HCT116 (cell line): ENCODE measurements at regions of chr10 and their contacts with region 1.

Region 1: DNA sequence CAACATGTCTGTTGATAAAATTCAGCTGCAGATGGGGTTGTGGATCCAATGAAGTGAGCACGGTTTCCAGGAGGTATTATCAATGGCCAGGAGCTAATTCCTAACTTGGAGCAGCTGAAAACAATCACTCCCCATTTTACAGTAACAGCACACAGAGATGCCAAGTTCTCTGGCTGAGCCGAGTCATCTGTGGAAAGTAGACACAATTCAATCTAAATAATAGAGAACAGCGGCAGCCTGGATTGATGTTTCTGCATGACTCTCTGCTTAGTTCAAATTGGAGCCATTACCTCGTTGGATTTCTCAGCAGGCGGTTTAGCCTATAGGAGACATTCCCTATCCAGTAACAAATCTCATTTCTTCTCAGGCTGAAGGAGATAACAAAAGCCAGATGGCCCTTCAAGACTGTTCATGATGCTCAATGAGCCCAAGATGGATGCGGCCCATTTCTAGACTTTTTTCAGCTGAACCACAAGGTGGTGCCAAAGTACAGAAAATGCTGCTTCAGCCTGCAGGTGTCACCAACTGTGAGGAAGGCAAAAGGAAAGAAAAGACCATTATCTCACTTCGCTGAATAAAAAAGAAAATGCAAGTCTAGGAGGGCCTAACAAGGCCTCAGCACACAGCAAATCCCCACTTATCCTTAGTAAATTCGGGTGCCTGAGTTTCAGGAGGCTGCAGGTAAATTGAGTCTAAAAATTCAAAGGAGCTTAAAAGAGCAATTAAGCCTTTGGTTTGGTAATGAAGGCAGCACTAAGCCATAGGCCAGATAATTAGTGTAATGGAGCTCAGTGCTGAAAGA is 83.7 kb downstream of the SLC16A9 start:
- DNase-seq: peak; percentile 48
- ATAC-seq: peak; percentile 88
- H3K4me3 ChIP-seq: no peak overlapping the region
- H3K27ac ChIP-seq: no peak overlapping the region
- H3K4me1 ChIP-seq: no peaks in the 10 kb centered on the region
- H3K27me3 ChIP-seq: no peaks in the 10 kb centered on the region
- CTCF ChIP-seq: peak; percentile 68 to 94 (median 90)
- POLR2A ChIP-seq: no peak
- RAD21 ChIP-seq: peak; percentile 96

Region 2: DNA sequence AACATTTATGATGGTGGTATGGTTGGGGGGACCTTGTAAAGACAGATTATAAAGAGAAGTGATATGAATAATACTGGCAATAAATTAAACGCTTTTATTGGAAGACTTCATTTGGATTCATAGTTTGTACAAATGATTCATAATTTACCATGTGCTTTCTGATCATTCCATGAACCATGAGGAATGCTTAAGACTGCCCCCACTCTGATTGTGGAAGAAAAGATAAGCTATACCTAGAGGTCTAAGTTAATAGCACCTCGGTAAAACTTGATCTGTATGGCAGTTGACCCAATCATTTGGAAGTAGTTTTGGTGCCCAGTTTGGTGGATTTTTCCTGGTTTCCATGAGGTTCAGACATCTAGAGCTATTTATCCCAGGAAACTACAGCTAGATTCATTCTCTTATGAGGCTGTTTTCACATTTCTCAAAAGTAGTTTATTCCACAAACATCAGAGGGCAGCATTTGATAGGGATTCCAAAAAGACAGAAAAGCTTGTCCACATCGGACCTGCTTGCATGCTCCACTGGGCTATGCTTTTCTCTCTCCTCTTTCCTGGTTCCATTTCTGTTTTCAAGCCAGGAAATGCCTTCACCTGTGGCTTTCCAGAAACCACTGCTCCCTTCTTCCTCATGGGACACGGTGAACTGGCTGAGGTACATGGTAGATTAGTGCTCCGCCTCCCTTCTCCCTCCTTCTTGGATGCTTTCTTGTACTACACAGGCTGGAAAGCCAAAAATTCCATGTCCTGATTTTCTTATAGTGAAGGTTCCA is 1211.5 kb before region 1 on chr10:
- CTCF ChIA-PET with region 1: no interaction called
- POLR2A ChIA-PET with region 1: no interaction called
- RAD21 ChIA-PET with region 1: no interaction called
- intact Hi-C with region 1: loop called (anchors 10 kb)
- DNase-seq: no peak
- ATAC-seq: peak; percentile 83
- H3K4me3 ChIP-seq: no peak overlapping the region
- H3K27ac ChIP-seq: no peak overlapping the region
- H3K4me1 ChIP-seq: no peaks in the 10 kb centered on the region
- H3K27me3 ChIP-seq: no peaks in the 10 kb centered on the region
- CTCF ChIP-seq: peak; percentile 38 to 50 (median 41); a peak in 5 of 6 replicates
- POLR2A ChIP-seq: no peak
- RAD21 ChIP-seq: peak; percentile 79

Region 3: DNA sequence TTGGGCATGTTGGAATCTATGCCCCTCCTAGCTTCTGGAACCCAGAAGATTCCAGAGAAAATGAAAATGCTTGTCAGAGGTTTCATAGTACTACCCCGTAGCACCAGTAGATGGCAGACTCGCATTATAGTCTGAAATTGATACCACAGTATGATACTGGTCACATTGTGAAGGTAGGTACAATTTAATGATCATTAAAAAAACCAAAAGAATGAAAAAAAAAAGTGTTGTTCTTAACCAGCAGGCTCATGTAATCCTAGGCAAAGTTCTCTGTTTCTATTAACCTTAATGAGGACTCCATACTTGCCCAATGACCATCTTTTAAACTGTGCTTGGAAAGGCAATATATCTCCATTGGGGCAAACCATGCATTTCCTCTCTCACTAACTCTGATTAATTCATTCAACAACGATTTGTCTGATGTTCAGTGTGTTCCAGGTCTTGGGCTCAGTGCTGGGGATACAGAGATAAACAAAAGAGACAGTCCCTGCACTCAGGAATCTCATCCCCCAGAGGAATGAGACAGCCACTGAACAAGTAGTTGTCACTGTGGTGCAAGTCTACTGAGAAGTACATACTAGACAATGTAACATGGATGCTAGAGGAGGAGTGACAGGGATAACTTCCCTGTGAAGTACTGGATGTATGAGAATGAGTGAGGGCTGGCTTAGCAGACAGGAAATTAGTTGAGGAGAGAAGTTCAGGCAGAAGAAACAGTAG is 673.0 kb before region 1 on chr10:
- CTCF ChIA-PET with region 1: interaction called, 12 read pairs
- POLR2A ChIA-PET with region 1: no interaction called
- RAD21 ChIA-PET with region 1: no interaction called
- intact Hi-C with region 1: no loop called
- DNase-seq: peak; percentile 24
- ATAC-seq: peak; percentile 76
- H3K4me3 ChIP-seq: no peak overlapping the region
- H3K27ac ChIP-seq: no peak overlapping the region
- H3K4me1 ChIP-seq: peaks cover 3 to 27% of the 10 kb centered on the region in 2 experiments; a peak in 3 of 4 replicates
- H3K27me3 ChIP-seq: no peaks in the 10 kb centered on the region
- CTCF ChIP-seq: peak; percentile 50 to 81 (median 61); a peak in 5 of 6 replicates
- POLR2A ChIP-seq: no peak
- RAD21 ChIP-seq: peak; percentile 72

Region 4: DNA sequence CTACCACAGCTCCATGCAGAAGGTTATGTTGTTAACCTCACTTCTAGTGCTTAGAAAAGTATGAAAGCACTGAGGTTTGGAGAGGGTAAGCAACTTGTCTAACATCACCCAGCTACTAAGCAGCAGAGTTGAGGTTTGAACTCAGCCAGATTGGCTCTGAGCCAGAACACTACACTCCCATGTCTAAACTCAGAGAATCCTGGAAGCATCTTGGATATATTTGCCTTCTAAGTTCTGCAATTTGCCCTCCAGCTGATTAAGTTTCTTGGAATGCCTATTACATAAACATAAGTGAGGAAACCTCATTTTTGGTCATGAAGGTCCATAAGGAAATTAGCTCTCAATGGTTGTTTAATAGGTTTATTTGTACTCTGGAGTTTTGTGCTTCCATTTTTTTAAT is 527.5 kb before region 1 on chr10:
- CTCF ChIA-PET with region 1: no interaction called
- POLR2A ChIA-PET with region 1: no interaction called
- RAD21 ChIA-PET with region 1: no interaction called
- intact Hi-C with region 1: no loop called
- DNase-seq: no peak
- ATAC-seq: no peak
- H3K4me3 ChIP-seq: no peak overlapping the region
- H3K27ac ChIP-seq: no peak overlapping the region
- H3K4me1 ChIP-seq: no peaks in the 10 kb centered on the region
- H3K27me3 ChIP-seq: no peaks in the 10 kb centered on the region
- CTCF ChIP-seq: no peak
- POLR2A ChIP-seq: no peak
- RAD21 ChIP-seq: no peak

Region 5: DNA sequence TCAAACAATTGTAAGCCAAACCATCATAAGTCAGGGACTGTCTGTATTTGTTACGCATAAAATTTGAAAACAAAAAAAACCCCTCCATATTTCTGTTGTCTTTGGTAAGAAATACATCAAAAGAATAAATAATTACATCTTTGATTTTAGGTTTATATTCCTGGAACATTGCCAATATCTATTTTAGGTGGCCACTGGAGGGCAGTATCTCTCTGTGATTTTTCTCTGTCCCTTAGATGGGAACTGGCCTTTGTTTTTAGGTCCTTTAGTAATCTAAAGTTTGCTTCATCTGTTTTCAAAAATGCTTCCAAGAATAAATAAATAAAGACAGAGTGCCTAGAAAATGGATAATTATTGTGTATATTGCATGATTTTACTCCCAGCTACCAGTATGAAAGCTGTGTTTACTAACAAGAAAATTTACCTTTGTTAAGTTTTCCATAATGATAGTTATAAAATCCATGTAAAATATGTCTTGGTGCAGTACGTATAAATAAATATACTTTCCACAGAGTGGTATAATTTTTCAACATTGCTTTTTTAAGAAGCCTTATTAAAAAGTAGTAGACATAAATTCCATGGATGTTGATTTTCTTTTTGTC is 385.2 kb before region 1 on chr10:
- CTCF ChIA-PET with region 1: interaction called, 10 read pairs
- POLR2A ChIA-PET with region 1: no interaction called
- RAD21 ChIA-PET with region 1: no interaction called
- intact Hi-C with region 1: loop called (anchors 1 kb)
- DNase-seq: peak; percentile 27
- ATAC-seq: no peak
- H3K4me3 ChIP-seq: no peak overlapping the region
- H3K27ac ChIP-seq: no peak overlapping the region
- H3K4me1 ChIP-seq: no peaks in the 10 kb centered on the region
- H3K27me3 ChIP-seq: no peaks in the 10 kb centered on the region
- CTCF ChIP-seq: peak; percentile 41 to 72 (median 58); a peak in 4 of 6 replicates
- POLR2A ChIP-seq: no peak
- RAD21 ChIP-seq: peak; percentile 74

Region 6: DNA sequence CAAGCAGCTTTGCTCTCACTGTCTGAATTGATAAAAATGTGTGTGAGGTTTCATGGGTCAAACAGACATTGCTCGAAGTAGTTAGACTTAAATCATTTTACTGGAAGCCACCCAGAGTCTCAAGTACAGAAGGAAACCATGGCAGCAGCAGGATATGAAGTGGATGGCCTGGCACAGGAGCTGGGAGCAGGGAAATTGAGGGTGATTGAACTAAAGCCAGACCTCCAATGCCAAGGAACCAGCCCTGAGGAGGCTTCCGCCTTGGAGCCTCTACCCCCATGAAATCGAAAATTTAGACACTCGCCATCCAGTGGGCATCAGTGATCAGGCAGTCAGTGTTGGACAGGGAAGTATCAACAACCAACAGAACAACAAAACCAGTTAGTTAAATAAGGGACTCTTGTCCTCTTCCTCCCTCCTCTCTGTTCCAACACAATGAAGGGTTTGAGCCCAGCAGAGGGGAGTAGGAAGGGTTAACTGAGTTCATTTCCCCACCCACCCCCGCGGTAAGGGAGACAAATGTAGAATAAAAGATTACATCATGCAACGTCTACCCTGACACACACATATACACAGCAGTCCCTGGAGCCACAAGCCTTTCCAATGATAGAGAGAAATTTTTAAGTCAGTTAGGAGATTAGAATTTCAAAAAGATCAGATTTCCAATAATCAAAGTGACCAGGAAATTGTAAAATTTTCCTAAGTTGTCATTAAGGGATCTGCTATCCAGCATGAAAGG is 72.6 kb before region 1 on chr10:
- CTCF ChIA-PET with region 1: no interaction called
- POLR2A ChIA-PET with region 1: no interaction called
- RAD21 ChIA-PET with region 1: no interaction called
- intact Hi-C with region 1: no loop called
- DNase-seq: no peak
- ATAC-seq: no peak
- H3K4me3 ChIP-seq: no peak overlapping the region
- H3K27ac ChIP-seq: no peak overlapping the region
- H3K4me1 ChIP-seq: no peaks in the 10 kb centered on the region
- H3K27me3 ChIP-seq: peaks cover 15% of the 10 kb centered on the region
- CTCF ChIP-seq: no peak
- POLR2A ChIP-seq: no peak
- RAD21 ChIP-seq: no peak

Region 7: GRCh38 chr10:59601982-59602381 is 23.9 kb before region 1 on chr10:
- CTCF ChIA-PET with region 1: no interaction called
- POLR2A ChIA-PET with region 1: no interaction called
- RAD21 ChIA-PET with region 1: no interaction called
- intact Hi-C with region 1: no loop called
- DNase-seq: no peak
- ATAC-seq: no peak
- H3K4me3 ChIP-seq: no peak overlapping the region
- H3K27ac ChIP-seq: no peak overlapping the region
- H3K4me1 ChIP-seq: no peaks in the 10 kb centered on the region
- H3K27me3 ChIP-seq: no peaks in the 10 kb centered on the region
- CTCF ChIP-seq: no peak
- POLR2A ChIP-seq: no peak
- RAD21 ChIP-seq: no peak

Region 8: DNA sequence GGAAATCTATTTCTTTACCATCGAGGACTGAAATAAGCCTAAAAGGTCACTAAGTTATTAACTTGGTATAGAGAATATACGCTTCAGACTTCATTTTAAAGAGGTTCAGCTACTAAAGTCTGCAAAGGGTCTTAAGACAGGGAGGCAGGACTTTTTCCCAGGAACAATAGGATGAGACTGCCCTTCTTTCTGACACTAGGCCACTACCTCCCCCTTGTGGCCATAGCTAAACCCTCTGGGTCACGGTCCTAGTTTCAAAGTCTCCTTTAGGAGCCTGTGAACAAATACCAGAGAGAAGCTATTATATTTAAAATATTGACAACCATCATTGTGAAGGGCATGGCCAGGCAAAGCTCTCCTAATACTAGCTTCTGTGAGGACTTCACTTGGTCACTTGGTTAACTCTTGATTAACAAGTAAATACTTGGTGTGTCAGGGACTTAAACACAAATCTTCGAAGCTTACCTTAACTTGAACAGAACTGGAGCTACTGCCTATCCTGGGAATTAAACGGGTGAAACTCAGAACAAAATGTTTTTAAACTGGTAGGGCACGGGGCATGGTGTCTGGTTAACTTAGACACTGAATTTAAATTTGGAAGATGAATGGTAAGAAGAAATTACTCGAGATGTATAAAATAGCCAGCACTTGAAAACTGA is 204.8 kb after region 1 on chr10:
- CTCF ChIA-PET with region 1: interaction called, 19 read pairs
- POLR2A ChIA-PET with region 1: no interaction called
- RAD21 ChIA-PET with region 1: no interaction called
- intact Hi-C with region 1: loop called (anchors 1 kb)
- DNase-seq: peak; percentile 34
- ATAC-seq: peak; percentile 90
- H3K4me3 ChIP-seq: no peak overlapping the region
- H3K27ac ChIP-seq: no peak overlapping the region
- H3K4me1 ChIP-seq: no peaks in the 10 kb centered on the region
- H3K27me3 ChIP-seq: no peaks in the 10 kb centered on the region
- CTCF ChIP-seq: peak; percentile 59 to 92 (median 86); a peak in 5 of 6 replicates
- POLR2A ChIP-seq: no peak
- RAD21 ChIP-seq: peak; percentile 56

Region 9: GRCh38 chr10:60208676-60209269 is 582.9 kb after region 1 on chr10:
- CTCF ChIA-PET with region 1: interaction called, 3 read pairs
- POLR2A ChIA-PET with region 1: no interaction called
- RAD21 ChIA-PET with region 1: no interaction called
- intact Hi-C with region 1: loop called (anchors 1 kb)
- DNase-seq: peak; percentile 23
- ATAC-seq: peak; percentile 60; the same call in 1 of the 2 replicates
- H3K4me3 ChIP-seq: no peak overlapping the region
- H3K27ac ChIP-seq: no peak overlapping the region
- H3K4me1 ChIP-seq: no peaks in the 10 kb centered on the region
- H3K27me3 ChIP-seq: no peaks in the 10 kb centered on the region
- CTCF ChIP-seq: peak; percentile 76 to 86 (median 85)
- POLR2A ChIP-seq: no peak
- RAD21 ChIP-seq: peak; percentile 89